ENCODE measurements at regions of chrX and their contacts with region 1.

Region 1: GRCh38 chrX:40175511-40176350 is 78.0 kb upstream of the BCOR start:
- DNase-seq: peak; percentile 72
- H3K4me3 Mint-ChIP-seq: peak overlapping the region; percentile 91
- H3K27ac Mint-ChIP-seq: peak overlapping the region; percentile 99
- H3K4me1 Mint-ChIP-seq: peaks cover 23% of the 10 kb centered on the region
- H3K27me3 Mint-ChIP-seq: no peaks in the 10 kb centered on the region

Region 2: GRCh38 chrX:40108959-40109287 is 66.8 kb before region 1 on chrX:
- CTCF ChIA-PET with region 1: no interaction called
- intact Hi-C with region 1: loop called (anchors 2 kb)
- DNase-seq: peak; percentile 71
- H3K4me3 Mint-ChIP-seq: peak overlapping the region; percentile 50
- H3K27ac Mint-ChIP-seq: no peak overlapping the region
- H3K4me1 Mint-ChIP-seq: peaks cover 8% of the 10 kb centered on the region
- H3K27me3 Mint-ChIP-seq: peaks cover 2% of the 10 kb centered on the region

Region 3: GRCh38 chrX:40244980-40245379 is 69.2 kb after region 1 on chrX:
- CTCF ChIA-PET with region 1: no interaction called
- intact Hi-C with region 1: loop called (anchors 5 kb)
- DNase-seq: peak; percentile 32
- H3K4me3 Mint-ChIP-seq: no peak overlapping the region
- H3K27ac Mint-ChIP-seq: no peak overlapping the region
- H3K4me1 Mint-ChIP-seq: peaks cover 13% of the 10 kb centered on the region
- H3K27me3 Mint-ChIP-seq: no peaks in the 10 kb centered on the region

Region 4: DNA sequence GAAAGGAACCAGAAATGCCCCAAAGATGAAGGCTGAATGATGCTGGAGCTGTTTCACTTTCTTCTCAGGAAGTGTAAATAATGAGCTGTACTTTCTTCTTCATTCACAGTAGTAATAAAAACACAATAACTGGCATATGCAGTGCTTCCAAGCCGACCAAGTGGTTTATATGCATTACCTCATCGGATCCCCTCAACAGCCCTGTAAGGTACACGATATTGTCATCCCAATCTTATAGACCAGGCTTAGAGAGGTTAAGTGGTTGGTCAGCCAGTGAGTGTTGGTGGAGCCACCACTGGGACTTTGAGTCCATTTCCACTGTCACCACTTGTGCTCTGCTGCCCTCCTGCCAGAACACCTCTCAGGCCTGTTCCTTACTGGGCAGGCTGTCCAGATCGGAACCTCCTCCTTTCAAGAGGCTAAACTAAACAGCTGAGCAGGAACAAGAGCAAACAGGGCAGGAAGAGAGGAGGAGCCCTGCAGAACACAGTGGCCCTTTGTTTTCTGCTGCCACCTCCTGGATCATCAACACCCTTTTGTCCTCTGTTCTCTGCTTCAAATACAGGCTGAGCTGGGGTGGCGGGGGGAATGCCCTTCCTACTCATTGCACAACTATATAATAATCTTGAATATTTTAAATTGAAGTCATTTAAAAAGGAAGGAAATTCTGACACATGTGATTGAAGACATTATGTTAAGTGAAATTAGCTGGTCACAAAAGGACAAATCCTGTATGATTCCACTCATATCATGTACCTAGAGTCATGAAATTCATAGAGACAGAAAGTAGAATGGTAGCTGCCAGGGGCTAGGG is 292.5 kb after region 1 on chrX:
- CTCF ChIA-PET with region 1: no interaction called
- intact Hi-C with region 1: loop called (anchors 2 kb)
- DNase-seq: peak; percentile 79
- H3K4me3 Mint-ChIP-seq: no peak overlapping the region
- H3K27ac Mint-ChIP-seq: peak overlapping the region; percentile 61
- H3K4me1 Mint-ChIP-seq: peaks cover 36% of the 10 kb centered on the region
- H3K27me3 Mint-ChIP-seq: no peaks in the 10 kb centered on the region